Esophagus muscularis mucosa (tissue), 4 donors: ENCODE measurements at regions of chr1 and their contacts with region 1.

Region 1: DNA sequence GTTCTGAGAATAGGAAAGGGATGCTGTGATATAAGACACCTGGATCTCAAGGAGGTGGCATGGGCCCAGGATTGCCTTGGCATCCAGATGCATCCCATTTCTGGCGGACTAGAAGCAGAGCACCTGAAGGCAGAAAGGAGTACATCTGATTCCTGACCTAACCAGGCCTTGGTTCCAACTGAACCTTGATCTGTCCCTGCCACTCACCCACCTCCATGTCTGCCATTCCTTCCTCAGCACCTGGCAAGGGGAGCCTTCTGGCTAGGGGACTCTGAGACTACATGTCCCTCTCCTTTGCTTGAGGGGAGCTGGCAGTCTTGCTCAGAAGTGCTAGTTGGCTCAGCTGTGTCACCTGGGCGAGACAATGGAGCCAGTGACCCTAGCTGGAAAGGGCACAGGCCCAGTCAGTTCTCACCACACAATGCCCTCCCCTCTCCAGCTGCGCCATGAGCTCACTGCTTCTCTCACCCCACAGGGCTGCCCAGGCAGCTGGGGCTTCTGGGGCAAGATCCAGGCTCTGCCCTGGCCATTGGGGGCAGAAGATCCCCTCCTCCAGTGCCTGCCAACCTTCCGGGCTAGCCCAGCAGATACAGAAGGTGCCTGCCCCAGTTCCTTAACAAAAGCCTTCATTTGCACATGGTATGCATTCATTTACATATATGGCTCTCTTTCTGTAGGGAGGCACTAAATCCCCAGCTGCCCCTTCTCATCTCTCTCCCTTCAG is 2.9 kb downstream of the IGSF8 start:
- DNase-seq: no peak
- H3K4me3 ChIP-seq: no peak overlapping the region
- H3K27ac ChIP-seq: peak overlapping the region in 2 of 4 donors; percentile 94 to 95
- H3K4me1 ChIP-seq: peaks cover 31 to 46% (median 40%) of the 10 kb centered on the region in 4 donors
- H3K27me3 ChIP-seq: no peaks in the 10 kb centered on the region
- CTCF ChIP-seq: no peak
- EP300 ChIP-seq: no peak
- POLR2A ChIP-seq: no peak

Region 2: DNA sequence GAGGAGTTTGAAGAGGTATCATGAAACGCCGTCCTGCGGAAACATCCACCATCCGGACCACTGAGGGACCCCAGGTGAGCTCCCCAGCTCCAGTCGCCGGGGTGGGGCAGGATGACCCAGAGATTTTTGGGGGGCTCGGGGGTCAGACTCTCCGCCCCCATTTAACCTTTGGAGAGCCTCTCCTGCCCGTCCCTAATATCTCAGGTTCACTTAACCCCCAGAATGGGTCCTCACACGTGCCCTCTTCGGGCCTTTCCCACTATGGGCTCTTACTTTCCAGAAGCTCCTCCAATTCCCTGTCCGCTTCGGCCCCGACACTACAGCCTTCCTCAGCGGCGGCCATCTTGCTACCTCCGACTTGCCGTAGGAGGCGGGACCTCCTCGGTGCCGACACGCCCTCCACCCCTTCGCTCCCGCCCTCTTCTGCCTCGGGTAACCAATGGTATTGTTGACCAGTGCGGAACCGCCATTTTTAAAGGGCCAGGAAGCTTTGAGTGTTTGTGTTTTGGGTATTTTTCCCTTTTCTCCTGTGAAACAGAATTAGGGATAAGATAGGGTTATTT is 189.3 kb after region 1 on chr1 and contains the start of gene PEX19:
- intact Hi-C with region 1: loop called (anchors 2 kb)
- DNase-seq: peak; percentile 97
- H3K4me3 ChIP-seq: peak within 1 kb of the TSS; percentile 68 to 94 (median 76)
- H3K27ac ChIP-seq: peak within 1 kb of the TSS; percentile 73 to 87 (median 85)
- H3K4me1 ChIP-seq: peaks cover 17 to 34% (median 24%) of the 10 kb centered on the region in 4 donors
- H3K27me3 ChIP-seq: no peaks in the 10 kb centered on the region
- CTCF ChIP-seq: peak in 1 of 3 experiments; percentile 15
- EP300 ChIP-seq: no peak
- POLR2A ChIP-seq: peak; percentile 54
- total RNA-seq, gene PEX19: 43.6 to 54.2 (median 46.1) TPM